ENCODE measurements at regions of chr1 and their contacts with region 1.

Region 1: GRCh38 chr1:6343506-6344405 is 49.8 kb downstream of the ACOT7 start:
- DNase-seq: peak; percentile 81
- H3K4me3 Mint-ChIP-seq: no peak overlapping the region
- H3K27ac Mint-ChIP-seq: no peak overlapping the region
- H3K4me1 Mint-ChIP-seq: peaks cover 10% of the 10 kb centered on the region
- H3K27me3 Mint-ChIP-seq: no peaks in the 10 kb centered on the region

Region 2: GRCh38 chr1:6287431-6287886 is 56.3 kb before region 1 on chr1:
- CTCF ChIA-PET with region 1: no interaction called
- DNase-seq: no peak
- H3K4me3 Mint-ChIP-seq: no peak overlapping the region
- H3K27ac Mint-ChIP-seq: no peak overlapping the region
- H3K4me1 Mint-ChIP-seq: no peaks in the 10 kb centered on the region
- H3K27me3 Mint-ChIP-seq: no peaks in the 10 kb centered on the region

Region 3: DNA sequence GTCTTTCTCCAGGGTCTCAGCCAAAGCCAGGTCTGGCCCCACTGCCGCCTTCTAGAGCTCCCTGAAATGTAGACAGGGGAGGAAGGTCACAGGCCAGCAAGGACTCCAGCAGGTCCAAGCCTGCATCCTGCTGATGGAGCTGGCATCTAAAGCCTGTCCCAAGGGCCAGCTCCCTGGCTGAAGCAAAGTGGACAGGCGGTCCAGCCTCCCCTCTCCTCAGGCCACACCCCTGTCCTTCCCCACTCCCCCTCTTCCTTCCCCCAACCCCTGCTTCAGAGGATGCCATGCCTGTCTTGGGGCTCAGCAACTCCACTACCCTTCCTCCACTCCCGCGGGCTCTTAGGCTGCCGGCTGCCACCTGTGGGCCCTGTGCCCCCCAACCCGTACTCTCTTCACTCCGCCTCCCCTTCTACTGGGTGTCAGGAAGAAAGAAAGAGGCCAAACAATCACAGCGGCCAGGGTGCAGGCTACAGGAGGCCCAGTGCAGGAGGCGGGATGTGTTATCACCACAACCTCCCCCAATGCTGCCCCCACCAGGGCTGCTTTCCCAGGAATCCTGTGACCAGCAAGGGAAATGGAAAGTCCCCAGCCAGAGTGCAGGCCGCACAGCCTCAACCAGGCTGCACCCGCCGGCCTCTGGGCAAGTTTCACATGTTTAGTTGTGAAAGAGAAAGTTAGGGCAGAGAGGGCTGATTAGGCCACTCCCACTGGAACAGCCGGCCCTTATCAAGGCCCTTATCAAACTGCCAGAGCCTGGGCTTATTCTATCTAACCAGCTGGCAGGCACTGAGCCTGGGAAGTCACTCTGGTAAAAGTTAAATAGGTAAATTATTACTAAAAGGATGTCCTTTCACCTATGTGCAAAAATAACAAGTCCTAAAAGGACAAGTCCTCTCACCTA is 15.7 kb after region 1 on chr1:
- CTCF ChIA-PET with region 1: interaction called, 50 read pairs
- DNase-seq: peak; percentile 82
- H3K4me3 Mint-ChIP-seq: peak overlapping the region; percentile 55
- H3K27ac Mint-ChIP-seq: peak overlapping the region; percentile 91
- H3K4me1 Mint-ChIP-seq: peaks cover 63% of the 10 kb centered on the region
- H3K27me3 Mint-ChIP-seq: no peaks in the 10 kb centered on the region

Region 4: GRCh38 chr1:6401673-6402072 is 57.9 kb after region 1 on chr1:
- CTCF ChIA-PET with region 1: interaction called, 52 read pairs
- DNase-seq: no peak
- H3K4me3 Mint-ChIP-seq: no peak overlapping the region
- H3K27ac Mint-ChIP-seq: no peak overlapping the region
- H3K4me1 Mint-ChIP-seq: peaks cover 13% of the 10 kb centered on the region
- H3K27me3 Mint-ChIP-seq: peaks cover 50% of the 10 kb centered on the region

Region 5: GRCh38 chr1:6423321-6423999 is 79.7 kb after region 1 on chr1:
- CTCF ChIA-PET with region 1: interaction called, 16 read pairs
- DNase-seq: peak; percentile 81
- H3K4me3 Mint-ChIP-seq: no peak overlapping the region
- H3K27ac Mint-ChIP-seq: no peak overlapping the region
- H3K4me1 Mint-ChIP-seq: peaks cover 24% of the 10 kb centered on the region
- H3K27me3 Mint-ChIP-seq: peaks cover 97% of the 10 kb centered on the region